ENCODE measurements at regions of chr22 and their contacts with region 1.

Region 1: DNA sequence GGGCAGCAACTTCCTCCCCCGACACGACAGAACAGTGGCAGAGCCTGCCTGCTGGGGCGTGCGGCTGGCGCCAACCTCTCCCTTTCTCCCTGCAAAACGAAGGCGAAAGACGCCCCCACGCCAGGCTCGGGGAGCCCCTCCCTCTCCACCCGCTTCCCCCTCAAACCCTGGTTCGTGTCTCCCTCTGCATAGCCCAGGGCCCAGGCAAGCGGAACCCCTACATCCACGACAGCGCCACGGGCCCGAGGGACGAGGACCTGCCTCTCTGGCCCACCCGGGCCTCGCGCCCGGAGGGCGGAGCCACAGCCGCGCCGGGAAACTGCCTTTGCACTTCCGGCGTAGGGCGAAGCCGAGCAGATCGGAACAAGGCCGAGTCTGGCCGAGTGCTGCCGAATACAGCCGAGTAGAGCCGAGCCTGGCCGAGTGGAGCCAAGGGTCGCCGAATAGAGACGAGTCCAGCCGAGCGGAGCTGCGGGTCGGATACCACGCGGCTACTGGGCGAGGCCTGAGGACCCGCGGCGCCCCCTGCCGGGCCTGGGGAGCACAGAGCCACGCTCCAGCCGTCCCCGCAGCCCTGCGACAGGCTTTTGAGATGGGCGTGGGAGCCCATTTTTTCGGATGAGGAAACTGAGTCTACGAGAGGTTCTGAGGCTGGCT is 11.2 kb upstream of the C1QTNF6 start:
- DNase-seq: peak; percentile 95 to 100
- H3K4me3 ChIP-seq: peak overlapping the region; percentile 77
- H3K27ac ChIP-seq: peak overlapping the region; percentile 94
- H3K4me1 ChIP-seq: peaks cover 46% of the 10 kb centered on the region
- H3K27me3 ChIP-seq: no peaks in the 10 kb centered on the region
- CTCF ChIP-seq: peak; percentile 91

Region 2: GRCh38 chr22:36546092-36546804 is 653.0 kb before region 1 on chr22:
- CTCF ChIA-PET with region 1: interaction called, 7 read pairs
- POLR2A ChIA-PET with region 1: no interaction called
- intact Hi-C with region 1: loop called (anchors 2 kb)
- DNase-seq: peak; percentile 58 to 59
- H3K4me3 ChIP-seq: peak overlapping the region; percentile 42
- H3K27ac ChIP-seq: 0 out of 2 replicates have a peak overlapping the region, but pooled peaks have one; percentile 7
- H3K4me1 ChIP-seq: peaks cover 32% of the 10 kb centered on the region
- H3K27me3 ChIP-seq: peaks cover 8% of the 10 kb centered on the region
- CTCF ChIP-seq: peak; percentile 91

Region 3: GRCh38 chr22:36873680-36874537 is 325.3 kb before region 1 on chr22:
- CTCF ChIA-PET with region 1: no interaction called
- POLR2A ChIA-PET with region 1: no interaction called
- intact Hi-C with region 1: loop called (anchors 2 kb)
- DNase-seq: peak; percentile 66 to 97
- H3K4me3 ChIP-seq: peak overlapping the region; percentile 8; the same call in 1 of the 2 replicates
- H3K27ac ChIP-seq: peak overlapping the region; percentile 90
- H3K4me1 ChIP-seq: peaks cover 59% of the 10 kb centered on the region
- H3K27me3 ChIP-seq: no peaks in the 10 kb centered on the region
- CTCF ChIP-seq: peak; percentile 80

Region 4: DNA sequence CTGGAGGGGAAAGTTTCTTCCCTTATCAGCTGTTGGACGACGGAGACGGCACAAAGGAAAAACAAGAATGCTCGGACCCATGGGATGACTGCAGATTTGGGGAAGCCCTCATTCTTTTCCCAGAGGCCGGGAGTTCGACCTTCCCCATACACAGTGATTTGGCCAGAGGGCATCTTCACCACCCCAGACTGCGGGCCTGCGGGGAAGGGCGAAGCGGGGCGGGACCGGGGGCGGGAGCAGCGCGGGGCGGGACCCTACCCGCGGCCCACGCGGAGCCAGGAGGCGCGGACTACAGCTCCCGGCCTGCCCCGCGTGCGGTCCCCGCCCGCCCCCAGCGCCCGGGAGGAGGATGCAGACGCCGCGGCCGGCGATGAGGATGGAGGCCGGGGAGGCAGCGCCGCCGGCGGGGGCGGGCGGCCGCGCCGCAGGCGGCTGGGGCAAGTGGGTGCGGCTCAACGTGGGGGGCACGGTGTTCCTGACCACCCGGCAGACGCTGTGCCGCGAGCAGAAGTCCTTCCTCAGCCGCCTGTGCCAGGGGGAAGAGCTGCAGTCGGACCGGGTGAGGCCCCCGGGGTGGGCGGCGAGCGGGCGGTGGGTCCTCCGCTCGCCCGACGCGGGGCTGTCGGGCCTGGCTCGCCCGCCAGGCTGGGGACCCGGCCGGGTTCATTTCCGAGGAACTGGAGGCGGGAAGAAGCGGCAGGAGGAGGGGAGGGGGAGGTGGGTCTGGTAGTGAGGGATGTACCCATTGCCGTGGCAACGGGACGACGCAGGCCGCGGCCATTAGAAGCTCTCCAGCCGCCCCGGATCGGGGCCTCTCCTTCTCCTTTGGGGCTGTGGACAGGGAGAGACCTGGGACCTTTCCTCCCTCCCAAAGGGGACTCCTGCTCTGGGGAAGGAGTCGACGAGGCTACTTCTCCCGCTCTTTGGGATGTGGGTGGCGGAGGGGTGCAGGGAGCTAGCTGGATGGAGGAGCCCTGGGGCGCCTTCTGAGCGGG is 147.5 kb before region 1 on chr22 and contains the start of gene KCTD17:
- CTCF ChIA-PET with region 1: interaction called, 13 read pairs
- POLR2A ChIA-PET with region 1: no interaction called
- intact Hi-C with region 1: loop called (anchors 5 kb)
- DNase-seq: peak in 1 of 2 experiments; percentile 73
- H3K4me3 ChIP-seq: peak within 1 kb of the TSS; percentile 87
- H3K27ac ChIP-seq: no peak within 1 kb of the TSS
- H3K4me1 ChIP-seq: peaks cover 7% of the 10 kb centered on the region; the same call in 1 of the 2 replicates
- H3K27me3 ChIP-seq: no peaks in the 10 kb centered on the region
- CTCF ChIP-seq: no peak
- total RNA-seq, gene KCTD17: 29.5 and 32.6 TPM in 2 replicates

Region 5: GRCh38 chr22:37154925-37155712 is 44.1 kb before region 1 on chr22:
- CTCF ChIA-PET with region 1: interaction called, 11 read pairs
- POLR2A ChIA-PET with region 1: interaction called, 5 read pairs
- intact Hi-C with region 1: loop called (anchors 5 kb)
- DNase-seq: peak in 1 of 2 experiments; percentile 64
- H3K4me3 ChIP-seq: no peak overlapping the region
- H3K27ac ChIP-seq: no peak overlapping the region
- H3K4me1 ChIP-seq: peaks cover 9% of the 10 kb centered on the region
- H3K27me3 ChIP-seq: no peaks in the 10 kb centered on the region
- CTCF ChIP-seq: no peak

Region 6: DNA sequence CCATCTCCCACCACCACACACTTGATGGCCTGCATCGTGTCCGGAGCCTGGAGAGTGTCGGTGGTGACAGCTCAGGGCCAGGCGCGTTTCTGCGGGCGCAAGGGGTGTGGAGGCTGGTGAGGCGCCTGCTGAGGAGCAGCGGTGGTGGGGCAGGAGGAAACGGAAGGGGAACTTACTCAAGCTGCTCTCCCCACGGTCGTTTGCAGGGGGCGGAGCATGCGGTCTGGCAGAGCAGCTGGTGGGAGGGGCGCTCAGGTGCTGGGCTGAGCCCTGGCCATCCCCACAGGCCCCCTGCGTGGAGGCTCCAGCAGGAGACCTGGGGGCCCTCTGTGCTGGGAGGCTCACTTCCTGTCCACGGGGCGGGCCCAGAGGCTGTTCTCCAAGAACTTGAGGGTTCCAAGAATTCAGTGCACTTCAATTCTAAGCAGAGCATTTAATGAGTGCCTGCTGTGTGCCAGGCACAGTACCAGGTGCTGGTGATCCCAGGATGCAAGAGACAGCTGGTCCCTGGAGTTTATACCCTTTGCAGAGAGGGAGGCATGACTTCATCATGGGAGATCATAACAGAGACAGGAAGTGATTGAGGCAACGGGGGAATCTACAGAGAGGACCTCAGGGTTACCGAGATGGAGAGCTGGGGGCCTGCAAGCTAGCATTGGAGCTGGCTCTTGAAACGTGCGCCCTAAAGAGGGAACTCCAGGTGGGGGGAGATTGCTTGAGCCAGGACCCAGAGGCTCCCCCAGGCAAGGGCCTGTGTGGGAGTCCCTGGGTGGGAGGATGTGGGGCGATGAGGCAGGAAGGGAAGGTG is 45.1 kb after region 1 on chr22 and contains the start of gene RAC2:
- CTCF ChIA-PET with region 1: interaction called, 5 read pairs
- POLR2A ChIA-PET with region 1: interaction called, 21 read pairs
- intact Hi-C with region 1: no loop called
- DNase-seq: peak; percentile 74 to 76
- H3K4me3 ChIP-seq: peak within 1 kb of the TSS; percentile 63
- H3K27ac ChIP-seq: no peak within 1 kb of the TSS
- H3K4me1 ChIP-seq: peaks cover 17% of the 10 kb centered on the region
- H3K27me3 ChIP-seq: no peaks in the 10 kb centered on the region
- CTCF ChIP-seq: no peak
- total RNA-seq, gene RAC2: 79.9 and 90.5 TPM in 2 replicates

Region 7: DNA sequence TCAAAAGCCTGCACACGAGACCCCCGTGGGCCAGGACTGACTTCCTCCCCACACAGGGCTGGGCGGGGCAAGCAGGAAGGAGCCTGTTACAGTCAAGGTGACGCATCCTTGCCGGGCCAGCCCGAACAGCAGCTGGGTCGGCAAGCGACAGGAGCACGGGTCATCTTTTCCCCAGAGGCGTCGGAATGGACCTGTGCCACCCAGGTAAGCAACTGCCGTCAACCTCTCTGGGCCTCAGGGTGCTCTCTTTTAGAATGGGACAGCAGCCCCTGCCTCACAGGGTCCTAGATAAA is 83.1 kb after region 1 on chr22 and contains the start of gene CYTH4:
- CTCF ChIA-PET with region 1: no interaction called
- POLR2A ChIA-PET with region 1: no interaction called
- intact Hi-C with region 1: no loop called
- DNase-seq: peak in 1 of 2 experiments; percentile 49
- H3K4me3 ChIP-seq: no peak within 1 kb of the TSS
- H3K27ac ChIP-seq: no peak within 1 kb of the TSS
- H3K4me1 ChIP-seq: peaks cover 6% of the 10 kb centered on the region; the same call in 1 of the 2 replicates
- H3K27me3 ChIP-seq: peaks cover 28% of the 10 kb centered on the region
- CTCF ChIP-seq: no peak
- total RNA-seq, gene CYTH4: not detected in 2 replicates

Region 8: GRCh38 chr22:37658133-37659065 is 459.2 kb after region 1 on chr22 and contains the start of gene PDXP:
- CTCF ChIA-PET with region 1: no interaction called
- POLR2A ChIA-PET with region 1: no interaction called
- intact Hi-C with region 1: no loop called
- DNase-seq: peak; percentile 99
- H3K4me3 ChIP-seq: peak within 1 kb of the TSS; percentile 69
- H3K27ac ChIP-seq: no peak within 1 kb of the TSS
- H3K4me1 ChIP-seq: peaks cover 28% of the 10 kb centered on the region
- H3K27me3 ChIP-seq: no peaks in the 10 kb centered on the region
- CTCF ChIP-seq: no peak
- total RNA-seq, gene PDXP: 10.9 and 13.5 TPM in 2 replicates

Region 9: GRCh38 chr22:37741312-37741795 is 542.1 kb after region 1 on chr22:
- CTCF ChIA-PET with region 1: interaction called, 10 read pairs
- POLR2A ChIA-PET with region 1: no interaction called
- intact Hi-C with region 1: no loop called
- DNase-seq: no peak
- H3K4me3 ChIP-seq: no peak overlapping the region
- H3K27ac ChIP-seq: peak overlapping the region; percentile 57
- H3K4me1 ChIP-seq: peaks cover 43% of the 10 kb centered on the region
- H3K27me3 ChIP-seq: no peaks in the 10 kb centered on the region
- CTCF ChIP-seq: no peak